ENCODE measurements at regions of chr9 and their contacts with region 1.

Region 1: GRCh38 chr9:135085830-135086546 is 1.5 kb upstream of the OLFM1 start:
- DNase-seq: peak; percentile 87
- ATAC-seq: peak; percentile 84

Region 2: DNA sequence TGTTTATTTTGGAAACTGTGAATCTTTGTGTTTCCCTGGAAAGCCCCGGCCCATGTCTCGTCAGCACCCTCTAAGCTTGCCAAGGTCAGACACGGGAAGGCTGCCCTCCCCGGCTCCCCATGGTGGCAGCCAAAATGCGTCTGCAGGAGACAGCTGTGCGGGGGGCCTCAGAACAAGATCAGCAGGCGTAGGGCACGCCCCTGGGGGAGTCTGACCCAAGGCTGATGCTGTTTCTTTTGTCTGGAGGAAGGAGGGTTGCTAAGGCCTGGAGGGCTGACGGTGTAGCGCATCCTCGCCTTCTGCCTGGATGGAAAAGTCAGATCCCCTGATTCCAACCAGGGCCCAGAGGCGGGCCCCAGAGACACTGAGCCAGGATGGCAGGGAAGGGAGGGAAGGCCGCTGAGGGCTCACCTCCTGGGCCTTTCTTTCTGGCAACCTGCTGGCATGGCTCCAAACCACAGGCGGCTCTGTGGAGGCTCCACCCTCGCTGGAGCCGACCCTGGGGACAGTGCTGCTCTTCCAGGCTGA is 58.7 kb after region 1 on chr9:
- intact Hi-C with region 1: no loop called
- DNase-seq: no peak
- ATAC-seq: peak; percentile 15

Region 3: GRCh38 chr9:135343837-135344522 is 258.0 kb after region 1 on chr9:
- intact Hi-C with region 1: loop called (anchors 2 kb)
- DNase-seq: peak; percentile 80
- ATAC-seq: peak; percentile 76

Region 4: GRCh38 chr9:135413459-135413858 is 327.5 kb after region 1 on chr9:
- intact Hi-C with region 1: loop called (anchors 2 kb)
- DNase-seq: no peak
- ATAC-seq: no peak